ENCODE measurements at regions of chr7 and their contacts with region 1.

Region 1: DNA sequence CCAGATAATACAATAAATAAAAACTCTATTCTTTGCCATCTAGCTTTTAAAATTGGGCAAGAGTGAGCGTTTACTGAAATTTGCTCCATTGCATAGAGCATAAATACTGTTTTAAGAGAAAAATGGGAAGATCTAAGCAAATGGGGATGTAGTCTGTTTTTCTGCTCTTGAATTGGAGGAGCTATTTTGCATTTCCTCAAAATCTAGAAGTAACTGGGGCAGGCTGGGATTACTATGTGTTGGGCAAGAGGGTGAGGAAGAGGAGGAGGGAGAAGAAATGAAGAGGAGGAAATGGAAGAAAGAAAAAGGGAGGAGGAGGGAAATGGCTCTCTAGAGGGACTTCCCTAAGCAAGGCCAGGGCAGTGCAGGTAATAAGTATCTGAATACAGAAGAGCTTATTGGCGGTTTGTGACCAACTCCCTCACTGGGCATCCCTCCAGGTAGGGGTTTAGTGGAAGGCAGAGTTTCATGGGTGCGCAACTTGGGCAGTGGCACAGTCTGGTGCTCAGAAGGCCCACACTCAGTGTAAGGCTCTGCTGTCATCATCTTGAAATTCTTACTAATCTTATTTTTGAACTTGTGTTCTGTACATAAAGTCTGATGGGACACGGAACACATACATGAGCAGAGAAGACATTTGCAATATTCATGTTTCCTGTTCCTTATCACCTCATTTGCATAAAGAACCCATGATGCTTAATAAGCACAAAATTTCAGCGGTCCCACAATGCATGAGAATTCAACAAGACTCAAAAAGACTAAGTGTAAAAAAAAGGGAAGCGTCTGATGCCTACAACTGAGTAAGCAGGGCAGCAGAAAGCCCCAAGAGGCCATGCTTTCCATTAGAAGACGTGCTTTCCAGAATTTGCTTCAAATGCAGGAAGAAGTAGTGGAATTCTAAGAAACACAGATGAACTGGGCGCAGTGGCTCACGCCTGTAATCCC is 116.9 kb downstream of the EVX1 start:
- H3K4me3 Mint-ChIP-seq: peak overlapping the region; percentile 10
- H3K27ac Mint-ChIP-seq: peak overlapping the region; percentile 76
- H3K4me1 Mint-ChIP-seq: peaks cover 36% of the 10 kb centered on the region
- H3K27me3 Mint-ChIP-seq: peaks cover 2% of the 10 kb centered on the region

Region 2: GRCh38 chr7:27283558-27283957 is 75.9 kb before region 1 on chr7:
- intact Hi-C with region 1: no loop called
- H3K4me3 Mint-ChIP-seq: no peak overlapping the region
- H3K27ac Mint-ChIP-seq: no peak overlapping the region
- H3K4me1 Mint-ChIP-seq: no peaks in the 10 kb centered on the region
- H3K27me3 Mint-ChIP-seq: peaks cover 36% of the 10 kb centered on the region

Region 3: DNA sequence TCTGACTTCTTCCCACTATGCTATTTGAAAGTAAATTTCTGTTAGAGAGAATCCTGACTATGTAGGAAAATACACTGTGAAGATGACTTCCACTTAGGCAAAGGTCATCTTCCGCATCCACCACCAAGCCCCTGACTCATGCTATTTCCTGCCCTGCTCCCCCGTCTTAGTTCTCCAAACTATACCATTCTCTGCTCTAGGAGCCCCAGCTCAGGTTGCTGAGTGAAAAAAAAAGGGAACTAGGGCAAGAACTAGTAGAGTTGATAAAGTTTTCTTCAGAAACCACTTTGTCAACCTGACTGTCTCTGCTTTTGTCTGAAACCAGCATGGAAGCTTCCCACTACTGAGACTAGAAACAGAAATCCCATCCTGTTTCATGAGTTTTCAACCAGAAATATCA is 20.0 kb before region 1 on chr7:
- intact Hi-C with region 1: loop called (anchors 1 kb)
- H3K4me3 Mint-ChIP-seq: no peak overlapping the region
- H3K27ac Mint-ChIP-seq: peak overlapping the region; percentile 88
- H3K4me1 Mint-ChIP-seq: peaks cover 45% of the 10 kb centered on the region
- H3K27me3 Mint-ChIP-seq: no peaks in the 10 kb centered on the region

Region 4: DNA sequence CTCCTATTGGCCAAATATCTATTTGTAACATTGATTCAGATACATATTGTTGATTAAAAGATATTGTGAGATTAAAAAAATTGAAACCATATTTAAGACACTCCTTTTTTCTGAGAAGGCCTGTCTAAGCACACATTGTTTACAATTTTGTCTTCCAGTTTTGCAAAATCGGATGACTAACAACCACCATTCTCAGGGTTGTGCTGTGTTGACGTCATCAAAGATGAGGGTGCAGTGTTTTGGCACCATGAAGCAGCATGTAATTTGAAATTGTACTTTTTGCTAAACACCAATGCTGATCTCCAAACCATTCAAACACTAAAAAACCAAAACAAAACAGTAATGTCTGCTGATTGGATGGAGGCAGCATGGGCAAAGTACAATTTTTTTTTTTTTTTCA is 1060.3 kb after region 1 on chr7:
- intact Hi-C with region 1: no loop called
- H3K4me3 Mint-ChIP-seq: no peak overlapping the region
- H3K27ac Mint-ChIP-seq: no peak overlapping the region
- H3K4me1 Mint-ChIP-seq: peaks cover 10% of the 10 kb centered on the region
- H3K27me3 Mint-ChIP-seq: peaks cover 45% of the 10 kb centered on the region

Measured in dendritic cell treated with granulocyte-macrophage colony-stimulating factor and Interleukin-4, amounts not matched to agents 40 ng/mL and 50 ng/mL, for 4 days (primary cell).